A549 (cell line): ENCODE measurements at regions of chr17 and their contacts with region 1.

Region 1: DNA sequence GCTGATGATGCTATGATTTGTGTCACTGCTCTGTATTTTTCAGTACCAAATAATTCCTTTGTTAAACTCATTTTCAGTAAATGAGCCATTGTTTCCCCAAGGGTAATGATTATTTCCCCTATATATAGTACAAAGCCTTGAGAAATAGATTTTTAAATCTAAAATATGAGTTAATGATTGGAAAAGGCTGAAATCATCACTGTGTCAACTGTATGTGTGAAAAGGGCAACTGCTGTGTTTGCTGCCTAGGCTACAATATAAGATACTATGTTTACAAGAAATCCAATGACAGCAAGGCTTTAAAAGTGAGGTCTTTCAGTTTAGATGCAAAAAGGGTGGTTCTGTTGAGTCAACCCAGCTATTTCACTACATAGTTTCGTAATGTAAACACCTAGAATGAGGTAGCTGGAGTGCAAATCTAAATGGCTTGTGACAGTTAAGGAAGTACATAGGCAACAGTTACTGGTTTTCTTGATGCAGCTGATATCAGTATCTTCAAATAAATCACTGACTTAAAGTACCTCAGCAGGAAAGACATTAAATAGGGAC is 15.3 kb downstream of the NLK start:
- DNase-seq: peak in 1 of 2 experiments; percentile 62
- ATAC-seq: peak; percentile 50 to 59; a peak in 3 of 6 replicates
- H3K4me3 ChIP-seq: no peak overlapping the region
- H3K27ac ChIP-seq: no peak overlapping the region
- H3K4me1 ChIP-seq: peaks cover 29% of the 10 kb centered on the region
- CTCF ChIP-seq: no peak
- EP300 ChIP-seq: no peak
- POLR2A ChIP-seq: no peak
- RAD21 ChIP-seq: no peak

Region 2: DNA sequence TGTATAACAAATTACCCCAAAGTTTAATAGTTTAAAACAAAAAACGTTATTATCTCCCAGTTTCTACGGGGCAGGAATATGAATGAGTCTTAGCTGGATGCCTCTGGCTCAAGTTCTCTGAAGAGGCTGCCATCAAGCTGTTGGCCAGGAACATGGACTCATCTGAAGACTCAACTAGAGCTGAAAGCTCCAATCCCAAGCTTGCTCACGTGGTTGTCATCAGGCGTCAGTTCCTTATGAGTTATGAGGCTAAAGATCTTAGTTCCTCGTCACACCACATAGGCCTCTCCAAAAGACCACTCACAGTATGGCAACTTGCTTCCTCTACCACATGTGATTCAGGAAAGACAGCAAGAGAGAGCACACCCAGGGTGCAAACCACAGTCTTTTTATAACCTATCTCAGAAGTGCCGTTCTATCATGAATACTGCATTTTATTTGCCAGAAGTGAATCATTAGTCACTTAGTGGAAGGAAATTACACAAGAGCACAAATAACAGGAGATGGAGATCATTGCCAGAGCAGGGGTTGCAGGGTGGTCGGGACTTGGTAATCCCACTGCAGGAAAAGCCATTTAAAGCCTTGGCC is 64.0 kb before region 1 on chr17:
- CTCF ChIA-PET with region 1: no interaction called
- POLR2A ChIA-PET with region 1: no interaction called
- DNase-seq: no peak
- ATAC-seq: no peak
- H3K4me3 ChIP-seq: no peak overlapping the region
- H3K27ac ChIP-seq: no peak overlapping the region
- H3K4me1 ChIP-seq: no peaks in the 10 kb centered on the region
- CTCF ChIP-seq: no peak
- EP300 ChIP-seq: no peak
- POLR2A ChIP-seq: no peak
- RAD21 ChIP-seq: no peak

Region 3: GRCh38 chr17:28041068-28041843 is 16.5 kb before region 1 on chr17:
- CTCF ChIA-PET with region 1: interaction called, 6 read pairs
- POLR2A ChIA-PET with region 1: interaction called, 14 read pairs
- DNase-seq: peak; percentile 99 to 100
- ATAC-seq: peak; percentile 96 to 98
- H3K4me3 ChIP-seq: peak overlapping the region; percentile 78
- H3K27ac ChIP-seq: peak overlapping the region; percentile 86 to 94
- H3K4me1 ChIP-seq: peaks cover 29% of the 10 kb centered on the region
- CTCF ChIP-seq: no peak
- EP300 ChIP-seq: no peak
- POLR2A ChIP-seq: peak; percentile 88
- RAD21 ChIP-seq: no peak